Head of caudate nucleus (tissue), 42 donors: ENCODE measurements at regions of chr17 and their contacts with region 1.

Region 1: DNA sequence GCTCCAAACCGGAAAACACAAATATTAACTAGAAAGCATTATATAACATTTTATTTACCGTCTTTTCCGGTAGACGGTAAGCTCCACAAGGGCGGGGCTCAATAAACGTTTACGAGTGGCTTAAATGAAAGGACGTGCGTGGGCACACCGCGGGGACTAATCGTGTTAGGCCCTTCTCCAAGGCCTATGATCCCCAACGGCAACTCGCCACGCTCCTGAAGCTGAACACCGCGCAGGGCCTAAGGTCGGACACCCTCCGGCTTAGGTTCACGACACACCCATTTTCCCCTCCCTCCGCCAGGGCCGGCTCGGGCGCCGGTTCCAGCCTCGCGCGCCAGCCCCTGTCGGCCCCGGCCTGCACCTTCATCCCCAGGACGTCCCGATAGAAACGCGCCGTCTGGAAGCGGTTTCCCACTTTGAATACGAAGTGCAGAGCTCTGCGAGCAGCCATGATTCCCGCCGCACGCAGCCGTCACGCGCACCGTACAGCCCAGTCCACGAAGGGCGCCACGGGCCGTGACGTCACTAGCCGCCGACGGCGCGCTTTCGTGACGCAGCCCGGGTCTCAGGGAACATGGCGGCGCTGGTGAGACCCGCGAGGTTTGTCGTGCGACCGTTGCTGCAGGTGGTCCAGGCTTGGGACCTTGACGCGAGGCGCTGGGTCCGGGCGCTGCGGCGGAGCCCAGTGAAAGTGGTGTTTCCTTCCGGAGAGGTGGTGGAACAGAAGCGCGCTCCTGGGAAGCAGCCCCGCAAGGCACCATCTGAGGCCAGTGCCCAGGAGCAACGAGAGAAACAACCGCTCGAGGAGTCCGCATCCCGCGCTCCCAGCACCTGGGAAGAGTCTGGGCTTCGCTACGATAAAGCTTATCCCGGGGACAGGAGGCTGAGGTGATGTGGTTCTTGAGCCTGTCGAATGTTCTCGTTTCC is at the starts of genes GLOD4 and MRM3:
- DNase-seq: peak; percentile 87 to 98 (median 95)

Region 2: GRCh38 chr17:732067-732901 is 49.8 kb before region 1 on chr17 and contains the start of gene TLCD3A:
- intact Hi-C with region 1: loop called (anchors 10 kb)
- DNase-seq: peak in 39 of 42 donors; percentile 26 to 87 (median 66)

Region 3: DNA sequence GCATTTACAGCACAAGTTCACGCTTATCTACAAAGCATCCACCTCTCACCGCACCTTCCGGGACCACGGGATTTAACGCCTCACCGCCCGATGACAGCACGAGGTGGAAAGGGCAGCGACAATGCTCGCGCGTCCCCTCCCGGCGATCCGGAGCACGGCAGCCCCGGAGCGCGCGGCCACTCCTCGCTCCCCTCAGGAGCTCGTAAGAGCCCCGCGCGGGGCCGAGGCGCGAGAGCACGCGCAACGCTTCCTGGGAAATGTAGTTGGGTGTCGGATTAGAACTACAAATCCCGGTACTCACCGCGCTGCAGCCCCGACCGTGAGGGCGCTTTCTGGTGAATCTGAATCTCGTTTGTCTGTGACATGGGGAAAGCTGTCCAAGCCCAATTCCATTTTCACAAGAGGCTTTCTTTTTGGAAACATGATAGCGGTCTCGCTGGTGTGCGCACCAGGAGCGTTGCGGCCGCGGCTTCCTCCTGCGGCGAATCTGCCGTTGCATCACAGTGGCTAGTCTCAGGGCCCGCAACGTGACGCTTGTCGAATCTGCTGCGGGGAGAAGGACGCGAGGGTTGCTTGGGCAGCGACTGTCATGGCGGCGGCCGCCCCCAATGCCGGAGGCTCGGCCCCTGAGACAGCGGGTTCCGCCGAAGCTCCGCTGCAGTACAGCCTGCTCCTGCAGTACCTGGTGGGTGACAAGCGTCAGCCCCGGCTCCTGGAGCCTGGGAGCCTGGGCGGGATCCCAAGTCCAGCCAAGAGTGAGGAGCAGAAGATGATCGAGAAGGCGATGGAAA is 214.7 kb after region 1 on chr17 and contains the start of gene TIMM22:
- intact Hi-C with region 1: loop called (anchors 5 kb)
- DNase-seq: peak; percentile 85 to 97 (median 93)